IMR-90 (cell line): ENCODE measurements at regions of chr2 and their contacts with region 1.

Region 1: GRCh38 chr2:202311823-202312388 is 46.3 kb downstream of the NOP58 start:
- DNase-seq: no peak
- ATAC-seq: no peak
- H3K4me3 ChIP-seq: no peak overlapping the region
- H3K27ac ChIP-seq: no peak overlapping the region
- H3K4me1 ChIP-seq: no peaks in the 10 kb centered on the region
- H3K27me3 ChIP-seq: no peaks in the 10 kb centered on the region
- CTCF ChIP-seq: no peak
- POLR2A ChIP-seq: no peak
- RAD21 ChIP-seq: no peak

Region 2: GRCh38 chr2:202361108-202361507 is 49.2 kb after region 1 on chr2:
- CTCF ChIA-PET with region 1: no interaction called
- POLR2A ChIA-PET with region 1: no interaction called
- dilution Hi-C with region 1: no loop called
- in situ Hi-C with region 1: no loop called
- intact Hi-C with region 1: loop called (anchors 5 kb)
- DNase-seq: peak; percentile 81
- ATAC-seq: peak; percentile 44
- H3K4me3 ChIP-seq: no peak overlapping the region
- H3K27ac ChIP-seq: no peak overlapping the region
- H3K4me1 ChIP-seq: peaks cover 4% of the 10 kb centered on the region
- H3K27me3 ChIP-seq: no peaks in the 10 kb centered on the region
- CTCF ChIP-seq: no peak
- POLR2A ChIP-seq: no peak
- RAD21 ChIP-seq: no peak